Panc1 (cell line): ENCODE measurements at regions of chr1 and their contacts with region 1.

Region 1: GRCh38 chr1:111448918-111449702 is at the starts of genes ATP5PB and WDR77:
- DNase-seq: peak; percentile 94
- ATAC-seq: peak; percentile 97
- H3K4me3 ChIP-seq: peak within 1 kb of the TSS; percentile 94 to 97
- H3K27ac ChIP-seq: peak within 1 kb of the TSS; percentile 94
- H3K4me1 ChIP-seq: peaks cover 22% of the 10 kb centered on the region
- H3K27me3 ChIP-seq: no peaks in the 10 kb centered on the region
- CTCF ChIP-seq: no peak
- total RNA-seq, gene ATP5PB: 178 TPM
- total RNA-seq, gene WDR77: 49.9 TPM

Region 2: DNA sequence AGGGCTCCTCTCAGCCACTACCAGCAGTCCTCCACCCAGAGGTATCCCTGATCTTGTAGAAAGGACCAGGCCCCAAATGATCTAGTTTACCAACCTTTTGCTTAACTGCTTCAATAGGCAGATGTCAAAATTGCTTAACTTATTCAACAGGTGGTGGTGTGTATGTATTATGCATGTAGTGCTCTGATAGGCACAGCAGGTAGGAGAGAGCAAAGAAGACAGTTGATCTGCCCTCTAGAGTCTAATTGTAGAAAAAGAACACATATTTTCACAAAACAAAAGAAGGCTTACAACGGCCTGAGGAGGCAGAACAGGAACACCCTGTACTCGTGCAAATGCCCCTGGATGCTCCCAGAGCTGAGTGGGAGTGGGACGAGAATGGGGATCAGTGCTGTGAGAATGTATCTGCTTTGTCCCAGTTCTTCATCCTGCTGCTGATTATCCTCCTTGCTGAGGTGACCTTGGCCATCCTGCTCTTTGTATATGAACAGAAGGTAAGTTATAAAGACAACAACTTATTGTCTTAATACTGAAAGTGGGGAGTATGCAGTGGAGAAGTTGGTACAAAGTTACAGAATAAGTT is 555.1 kb before region 1 on chr1:
- CTCF ChIA-PET with region 1: no interaction called
- POLR2A ChIA-PET with region 1: no interaction called
- in situ Hi-C with region 1: no loop called
- intact Hi-C with region 1: no loop called
- DNase-seq: no peak
- ATAC-seq: no peak
- H3K4me3 ChIP-seq: no peak overlapping the region
- H3K27ac ChIP-seq: no peak overlapping the region
- H3K4me1 ChIP-seq: no peaks in the 10 kb centered on the region
- H3K27me3 ChIP-seq: no peaks in the 10 kb centered on the region
- CTCF ChIP-seq: no peak

Region 3: DNA sequence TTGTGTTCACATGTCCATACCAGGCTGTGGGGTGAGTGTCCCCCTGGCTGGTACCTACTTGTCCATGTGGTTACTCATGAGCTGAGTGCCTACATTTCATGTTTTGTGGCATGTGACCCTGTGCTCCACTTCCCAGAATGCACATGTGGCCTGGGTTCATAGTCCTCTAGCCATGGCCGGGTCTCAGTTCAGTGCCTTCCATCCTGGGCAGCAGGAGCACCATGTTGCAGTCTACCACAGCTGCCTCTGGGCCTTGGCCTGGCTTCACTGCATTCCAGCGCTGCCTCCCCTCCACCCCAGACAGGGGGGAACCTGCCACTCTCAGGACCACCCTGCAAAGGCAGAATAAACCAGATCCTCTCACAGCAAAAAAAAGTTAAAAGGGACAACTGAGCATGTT is 303.6 kb before region 1 on chr1:
- CTCF ChIA-PET with region 1: no interaction called
- POLR2A ChIA-PET with region 1: interaction called, 13 read pairs
- in situ Hi-C with region 1: no loop called
- intact Hi-C with region 1: no loop called
- DNase-seq: no peak
- ATAC-seq: no peak
- H3K4me3 ChIP-seq: no peak overlapping the region
- H3K27ac ChIP-seq: no peak overlapping the region
- H3K4me1 ChIP-seq: peaks cover 9% of the 10 kb centered on the region; the same call in 1 of the 2 replicates
- H3K27me3 ChIP-seq: no peaks in the 10 kb centered on the region
- CTCF ChIP-seq: no peak

Region 4: GRCh38 chr1:111392460-111392945 is 56.6 kb before region 1 on chr1:
- CTCF ChIA-PET with region 1: no interaction called
- POLR2A ChIA-PET with region 1: no interaction called
- in situ Hi-C with region 1: no loop called
- intact Hi-C with region 1: no loop called
- DNase-seq: no peak
- ATAC-seq: no peak
- H3K4me3 ChIP-seq: no peak overlapping the region
- H3K27ac ChIP-seq: no peak overlapping the region
- H3K4me1 ChIP-seq: no peaks in the 10 kb centered on the region
- H3K27me3 ChIP-seq: no peaks in the 10 kb centered on the region
- CTCF ChIP-seq: no peak